ENCODE measurements at regions of chrX and their contacts with region 1.

Region 1: GRCh38 chrX:8815464-8816065 is 14.4 kb upstream of the FAM9A start:
- DNase-seq: peak; percentile 12
- ATAC-seq: peak; percentile 51
- H3K4me3 Mint-ChIP-seq: no peak overlapping the region
- H3K27ac Mint-ChIP-seq: no peak overlapping the region
- H3K4me1 Mint-ChIP-seq: no peaks in the 10 kb centered on the region
- H3K27me3 Mint-ChIP-seq: no peaks in the 10 kb centered on the region
- CTCF ChIP-seq: peak; percentile 57

Region 2: DNA sequence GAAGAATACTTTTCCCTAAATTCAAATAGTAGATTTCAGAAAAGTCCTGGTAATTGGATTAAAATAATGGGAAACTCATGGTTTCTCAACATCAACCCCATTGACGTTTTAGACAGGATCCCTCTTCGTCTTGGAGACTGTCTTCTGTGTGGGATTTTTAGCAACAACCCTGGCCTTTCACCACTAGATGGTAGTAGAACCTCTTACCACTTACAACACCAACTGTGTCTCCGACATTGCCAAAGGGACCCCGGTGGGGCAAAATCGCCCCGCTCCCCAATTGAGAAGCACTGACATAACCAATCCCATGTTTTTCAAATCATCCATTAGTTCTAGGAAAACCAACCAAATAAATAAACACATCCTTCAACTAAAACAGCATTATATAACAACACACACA is 66.7 kb before region 1 on chrX:
- CTCF ChIA-PET with region 1: interaction called, 11 read pairs
- POLR2A ChIA-PET with region 1: no interaction called
- intact Hi-C with region 1: loop called (anchors 10 kb)
- DNase-seq: no peak
- ATAC-seq: no peak
- H3K4me3 Mint-ChIP-seq: no peak overlapping the region
- H3K27ac Mint-ChIP-seq: no peak overlapping the region
- H3K4me1 Mint-ChIP-seq: no peaks in the 10 kb centered on the region
- H3K27me3 Mint-ChIP-seq: peaks cover 6% of the 10 kb centered on the region
- CTCF ChIP-seq: peak; percentile 32

Region 3: DNA sequence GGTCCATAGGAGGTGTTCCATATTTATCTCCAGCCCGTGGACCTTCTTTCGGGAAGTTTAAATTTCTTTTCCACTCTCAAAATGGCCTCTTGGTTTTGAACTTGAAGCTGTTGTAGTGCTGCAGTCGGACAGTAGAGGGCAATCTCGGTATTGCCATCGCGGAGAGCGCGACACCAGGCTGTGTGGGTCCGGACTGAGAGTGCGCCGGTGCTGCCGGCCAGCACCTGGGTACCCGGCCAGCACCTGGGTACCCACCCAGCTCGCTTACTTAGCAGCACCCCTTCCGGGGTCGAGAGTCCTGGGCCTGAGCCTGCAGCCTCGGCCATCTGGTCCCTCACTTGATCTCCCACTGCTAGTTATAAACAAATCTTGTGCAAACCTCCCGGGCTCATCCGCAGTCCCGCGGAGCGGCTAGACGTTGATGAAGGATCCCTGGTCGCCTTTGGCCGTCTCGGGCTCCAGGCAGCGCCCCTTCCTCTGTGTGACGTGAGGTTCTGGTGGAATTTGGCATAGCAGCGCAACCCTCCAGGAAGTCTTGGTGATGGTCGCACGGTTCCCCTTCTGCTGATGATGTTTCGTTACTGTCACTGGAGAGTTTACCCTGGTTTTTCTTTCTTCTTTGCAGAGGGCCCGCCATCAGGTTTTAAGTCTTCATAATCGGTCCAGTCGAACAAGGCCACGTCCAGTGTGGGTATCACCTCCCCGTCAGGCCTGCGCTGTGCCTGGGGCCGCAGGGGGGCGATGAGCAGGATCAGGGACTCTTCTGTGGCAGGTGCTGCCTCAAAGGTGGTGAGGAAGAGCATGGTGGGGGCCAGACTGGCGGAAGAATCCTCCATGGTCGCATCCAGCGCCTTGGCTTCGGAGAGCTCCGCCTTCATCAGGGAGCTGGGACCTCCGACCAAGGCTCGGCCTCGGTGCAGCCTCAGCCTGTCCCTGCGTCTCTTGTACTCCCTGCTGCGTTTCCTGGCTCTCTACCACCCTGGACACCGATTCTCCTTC is 32.2 kb before region 1 on chrX:
- CTCF ChIA-PET with region 1: no interaction called
- POLR2A ChIA-PET with region 1: no interaction called
- intact Hi-C with region 1: loop called (anchors 2 kb)
- DNase-seq: peak; percentile 59
- ATAC-seq: peak; percentile 79
- H3K4me3 Mint-ChIP-seq: no peak overlapping the region
- H3K27ac Mint-ChIP-seq: no peak overlapping the region
- H3K4me1 Mint-ChIP-seq: peaks cover 4% of the 10 kb centered on the region
- H3K27me3 Mint-ChIP-seq: no peaks in the 10 kb centered on the region
- CTCF ChIP-seq: peak; percentile 51

Measured in activated CD8-positive, alpha-beta T cell treated with anti-CD3 and anti-CD28 coated beads for 36 hours (primary cell).